ENCODE measurements at regions of chrX and their contacts with region 1.

Region 1: DNA sequence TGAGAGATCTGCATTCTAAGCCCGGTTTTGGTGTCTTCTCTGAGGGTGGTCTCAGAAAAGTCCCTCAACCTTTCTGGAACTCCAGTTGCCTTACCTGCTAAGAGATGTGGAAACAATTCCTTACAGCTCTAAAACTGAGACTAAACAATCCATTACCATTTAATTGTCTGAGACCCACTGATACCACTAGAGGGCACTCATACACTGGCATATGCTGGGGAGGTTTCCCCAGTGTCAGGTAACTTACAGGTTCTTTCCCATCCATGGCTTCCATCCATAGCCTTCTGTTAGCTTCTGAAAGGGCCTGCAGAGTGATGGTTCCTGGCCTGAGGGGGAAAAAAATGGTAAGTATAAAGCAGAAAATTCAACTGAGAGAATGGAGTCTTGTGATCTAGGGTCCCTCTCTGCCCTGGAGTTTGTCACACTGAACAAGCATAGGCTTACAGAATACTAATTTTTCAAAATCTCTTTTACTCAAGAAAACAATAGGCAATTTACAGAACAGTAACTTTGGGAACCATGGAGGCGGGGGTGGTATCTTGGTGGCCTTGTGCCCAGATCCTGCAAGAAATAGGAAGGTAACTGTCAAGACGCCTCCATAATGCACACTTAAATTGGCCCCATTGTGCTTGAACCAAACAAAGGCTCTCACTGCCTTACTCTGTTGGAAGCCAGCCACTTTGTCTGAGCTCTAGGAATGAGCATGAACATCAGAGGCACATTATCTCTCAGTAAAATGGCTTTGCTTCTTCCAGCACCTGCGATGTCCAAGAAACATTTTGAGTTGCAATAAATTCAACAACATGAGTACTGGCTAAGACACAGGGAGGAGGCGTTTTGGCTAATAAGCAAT is 236.1 kb downstream of the OPHN1 start:
- DNase-seq: no peak
- ATAC-seq: peak; percentile 56

Region 2: DNA sequence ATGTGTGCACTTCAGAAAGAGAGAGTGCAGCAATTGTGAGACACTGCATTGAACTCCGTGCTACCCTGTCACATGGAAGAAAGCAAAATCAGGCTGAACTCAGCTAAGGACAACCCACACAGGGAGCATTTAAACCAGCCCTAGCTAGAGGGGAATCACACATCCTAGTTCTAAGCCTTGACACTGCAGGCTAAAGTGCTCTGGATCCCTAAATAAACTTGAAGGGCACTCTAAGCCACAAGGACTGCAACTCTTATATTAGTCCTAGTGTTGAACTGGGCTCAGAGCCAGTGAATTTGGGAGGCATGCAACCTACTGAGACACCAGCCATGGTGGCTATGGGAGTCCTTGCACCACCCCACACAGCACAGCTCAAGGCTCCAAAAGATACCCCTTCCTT is 75.8 kb before region 1 on chrX:
- intact Hi-C with region 1: no loop called
- DNase-seq: no peak
- ATAC-seq: peak; percentile 69

Region 3: DNA sequence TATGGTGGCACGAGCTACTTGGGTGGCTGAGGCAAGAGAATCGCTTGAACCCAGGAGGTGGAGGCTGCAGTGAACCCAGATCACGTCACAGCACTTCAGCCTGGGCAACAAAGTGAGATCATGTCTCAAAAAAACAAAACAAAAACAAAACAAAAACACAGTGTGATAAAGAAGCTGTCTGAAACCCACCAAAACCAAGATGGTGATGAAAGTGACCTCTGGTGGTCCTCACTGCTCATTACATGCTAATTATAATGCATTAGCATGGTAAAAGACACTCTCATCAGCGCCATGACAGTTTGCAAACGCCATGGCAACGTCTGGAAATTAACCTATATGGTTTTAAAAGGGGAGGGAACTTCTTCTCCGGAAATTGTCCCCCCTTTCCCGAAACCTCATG is 265.5 kb after region 1 on chrX:
- intact Hi-C with region 1: loop called (anchors 10 kb)
- DNase-seq: no peak
- ATAC-seq: peak; percentile 53

Region 4: DNA sequence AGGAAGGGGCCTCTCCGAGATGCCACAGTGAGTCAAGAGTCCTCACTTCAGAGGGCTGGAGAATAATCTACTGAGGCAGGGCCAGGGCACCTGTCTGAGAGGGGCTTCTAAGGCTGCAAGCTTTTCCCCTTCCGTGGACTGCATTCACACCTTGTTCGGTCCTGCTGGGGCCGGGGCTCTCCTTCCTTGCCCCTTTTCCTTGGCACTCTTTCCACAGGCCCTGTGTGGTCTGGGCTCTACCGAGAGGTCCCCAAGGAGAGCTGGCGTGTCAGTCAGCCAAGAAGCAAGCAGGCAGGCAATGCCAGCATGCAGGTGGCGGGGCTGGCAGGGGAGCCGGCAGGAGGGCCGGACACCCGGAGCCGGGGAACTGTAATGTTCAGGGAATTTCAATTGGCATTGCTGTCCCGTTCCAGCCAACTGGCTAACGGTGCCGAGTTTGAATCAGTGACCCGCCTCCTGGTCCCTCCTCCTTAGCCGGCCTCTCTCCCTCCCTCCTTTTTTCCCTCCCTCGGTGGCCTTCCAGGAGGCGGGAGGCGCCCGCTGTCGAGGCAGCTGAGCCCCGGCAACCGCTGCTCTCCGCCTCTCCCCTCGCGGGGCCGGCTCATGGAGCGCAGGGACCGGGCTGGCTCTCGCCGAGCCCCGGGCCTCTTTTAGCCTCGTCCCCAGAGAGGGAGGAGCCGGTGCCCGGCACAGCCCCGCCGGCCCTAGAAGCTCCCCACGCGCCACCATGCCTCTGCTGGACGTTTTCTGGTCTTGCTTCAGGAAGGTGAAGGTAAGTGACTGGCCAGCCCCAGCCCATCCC is 450.2 kb after region 1 on chrX and contains the start of gene STARD8:
- intact Hi-C with region 1: no loop called
- DNase-seq: peak; percentile 54
- ATAC-seq: peak; percentile 87
- total RNA-seq, gene STARD8: 10.5 TPM